Activated CD4-positive, alpha-beta memory T cell treated with anti-CD3 and anti-CD28 coated beads, Interleukin-2, amount 10 ng/mL, durations not matched to agents 7 days and 5 days (primary cell): ENCODE measurements at regions of chr2 and their contacts with region 1.

Region 1: GRCh38 chr2:204881655-204882054 is 336.4 kb downstream of the PARD3B start:
- DNase-seq: peak; percentile 55
- H3K4me3 Mint-ChIP-seq: peak overlapping the region; percentile 42
- H3K27ac Mint-ChIP-seq: peak overlapping the region; percentile 83
- H3K4me1 Mint-ChIP-seq: peaks cover 52% of the 10 kb centered on the region
- H3K27me3 Mint-ChIP-seq: no peaks in the 10 kb centered on the region

Region 2: GRCh38 chr2:204860274-204860673 is 21.4 kb before region 1 on chr2:
- CTCF ChIA-PET with region 1: no interaction called
- POLR2A ChIA-PET with region 1: no interaction called
- DNase-seq: no peak
- H3K4me3 Mint-ChIP-seq: no peak overlapping the region
- H3K27ac Mint-ChIP-seq: no peak overlapping the region
- H3K4me1 Mint-ChIP-seq: no peaks in the 10 kb centered on the region
- H3K27me3 Mint-ChIP-seq: peaks cover 15% of the 10 kb centered on the region

Region 3: GRCh38 chr2:204892506-204893255 is 11.0 kb after region 1 on chr2:
- CTCF ChIA-PET with region 1: no interaction called
- POLR2A ChIA-PET with region 1: interaction called, 10 read pairs
- DNase-seq: no peak
- H3K4me3 Mint-ChIP-seq: no peak overlapping the region
- H3K27ac Mint-ChIP-seq: no peak overlapping the region
- H3K4me1 Mint-ChIP-seq: peaks cover 2% of the 10 kb centered on the region
- H3K27me3 Mint-ChIP-seq: no peaks in the 10 kb centered on the region